ENCODE measurements at regions of chr17 and their contacts with region 1.

Region 1: DNA sequence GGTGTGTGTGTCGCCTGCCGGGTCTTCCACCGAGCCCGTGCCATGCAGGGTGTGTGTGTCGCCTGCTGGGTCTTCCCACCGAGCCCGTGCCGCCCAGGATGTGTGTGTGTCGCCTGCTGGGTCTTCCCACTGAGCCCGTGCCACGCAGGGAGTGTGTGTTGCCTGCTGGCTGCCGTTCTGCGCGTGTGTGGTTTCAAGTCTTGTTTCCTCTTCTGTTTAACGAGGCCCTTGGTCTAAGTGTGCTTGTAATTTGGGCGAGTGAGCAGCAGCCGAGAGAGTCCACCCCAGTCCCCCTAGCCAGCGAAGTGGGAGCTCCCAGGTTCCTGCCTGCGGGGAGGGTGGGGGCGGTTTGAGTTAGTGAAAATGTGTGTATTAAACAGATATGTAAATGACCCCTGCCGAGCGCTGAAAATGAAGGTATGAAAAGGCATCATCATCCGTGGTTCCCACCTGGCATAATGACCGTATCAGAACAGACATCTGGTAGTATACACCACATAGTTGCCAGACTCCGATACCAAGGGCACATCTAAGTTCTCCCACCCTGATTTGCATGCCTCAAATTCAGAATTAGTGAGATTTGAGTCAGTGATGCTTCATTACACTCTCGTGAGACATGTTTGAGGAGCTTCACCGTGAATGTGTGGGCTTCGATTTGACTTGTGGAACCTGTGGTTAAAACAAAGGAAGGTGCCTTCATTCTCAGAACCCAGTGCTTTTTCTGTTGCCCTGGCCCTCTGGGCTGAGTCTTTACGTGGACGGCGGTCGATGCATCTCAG is 114.5 kb upstream of the CHMP6 start:
- DNase-seq: peak; percentile 89
- H3K4me3 Mint-ChIP-seq: peak overlapping the region; percentile 88
- H3K27ac Mint-ChIP-seq: peak overlapping the region; percentile 99
- H3K4me1 Mint-ChIP-seq: peaks cover 57% of the 10 kb centered on the region
- H3K27me3 Mint-ChIP-seq: no peaks in the 10 kb centered on the region

Region 2: DNA sequence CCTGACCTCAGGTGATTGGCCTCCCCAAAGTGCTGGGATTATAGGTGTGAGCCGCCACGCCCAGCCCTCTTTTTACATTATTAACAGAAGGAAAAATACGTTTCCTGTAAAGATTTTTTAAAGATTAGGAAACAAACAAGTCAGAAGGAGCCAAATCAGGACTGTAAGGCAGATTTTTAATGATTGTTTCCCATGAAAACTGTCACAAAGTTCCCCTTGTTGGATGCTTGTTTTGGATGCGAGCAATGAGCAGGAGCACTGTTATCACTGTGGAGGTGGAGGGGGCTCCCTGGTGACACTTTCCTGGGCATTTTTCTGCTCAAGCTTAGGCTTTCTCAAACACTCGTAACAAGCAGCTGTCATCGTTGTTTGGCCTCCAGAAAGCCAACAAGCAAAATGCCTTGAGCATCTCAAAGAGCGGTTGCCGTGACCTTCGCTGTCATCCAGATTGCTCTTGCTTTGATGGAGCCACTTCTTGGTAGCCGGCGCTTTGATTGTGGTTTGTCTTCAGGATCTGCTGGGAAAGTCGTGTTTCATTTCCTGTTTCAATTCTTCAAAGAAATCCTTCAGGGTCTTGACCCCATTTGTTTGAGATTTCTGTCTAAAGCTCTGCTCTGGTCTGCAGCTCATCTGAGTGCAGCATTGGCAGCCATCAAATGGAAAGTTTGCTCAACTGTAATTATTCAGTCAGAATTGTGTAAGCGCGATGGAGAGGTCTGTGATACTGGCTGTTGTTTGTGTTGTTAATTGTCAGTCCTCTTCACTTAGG is 203.8 kb before region 1 on chr17:
- intact Hi-C with region 1: loop called (anchors 5 kb)
- DNase-seq: peak; percentile 81
- H3K4me3 Mint-ChIP-seq: peak overlapping the region; percentile 58
- H3K27ac Mint-ChIP-seq: peak overlapping the region; percentile 72
- H3K4me1 Mint-ChIP-seq: peaks cover 77% of the 10 kb centered on the region
- H3K27me3 Mint-ChIP-seq: no peaks in the 10 kb centered on the region

Region 3: DNA sequence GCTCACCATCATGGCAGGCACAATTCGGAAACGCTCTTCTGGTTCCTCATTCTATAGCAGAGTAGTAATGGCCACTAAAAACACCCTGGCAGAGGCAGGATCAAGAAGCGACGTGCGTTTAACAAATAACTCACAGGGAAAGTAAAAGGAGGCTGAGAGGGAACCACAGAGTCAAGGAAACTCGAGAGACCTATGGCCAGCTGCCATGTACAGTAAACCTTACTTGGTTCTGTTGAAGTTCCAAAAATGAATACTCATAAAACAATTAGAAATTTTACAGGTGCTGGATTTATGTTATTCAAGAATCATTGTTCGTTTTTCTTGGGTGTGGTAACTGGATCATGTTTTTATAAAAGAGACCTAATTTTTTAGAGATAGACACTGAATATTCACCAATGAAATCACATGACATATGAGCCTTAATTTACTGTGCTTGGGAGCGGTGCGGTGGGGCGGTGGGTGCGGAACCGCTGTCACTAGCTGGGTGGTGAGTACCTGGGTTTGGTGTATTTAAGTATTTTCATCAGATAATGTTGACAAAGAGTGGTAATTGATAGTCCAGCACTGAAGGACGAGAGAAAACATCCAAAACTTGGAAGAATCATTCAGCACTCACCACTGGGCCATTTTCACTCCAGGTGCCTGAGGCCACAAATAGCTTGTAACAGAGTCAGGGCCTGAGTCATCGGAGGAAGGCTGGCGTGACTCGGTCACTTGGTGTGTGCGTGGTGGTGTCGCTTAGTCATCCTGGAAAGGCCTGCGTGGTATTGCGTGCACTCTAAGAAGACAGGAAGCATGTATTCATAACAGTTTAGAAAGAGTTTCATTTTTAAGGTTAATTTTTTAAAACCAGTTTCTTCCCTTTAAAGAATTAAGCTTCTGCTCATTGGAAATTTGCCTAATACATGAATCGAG is 20.9 kb before region 1 on chr17:
- intact Hi-C with region 1: loop called (anchors 1 kb)
- DNase-seq: peak; percentile 95
- H3K4me3 Mint-ChIP-seq: peak overlapping the region; percentile 62
- H3K27ac Mint-ChIP-seq: peak overlapping the region; percentile 91
- H3K4me1 Mint-ChIP-seq: peaks cover 73% of the 10 kb centered on the region
- H3K27me3 Mint-ChIP-seq: no peaks in the 10 kb centered on the region

Measured in activated CD4-positive, alpha-beta T cell treated with anti-CD3 and anti-CD28 coated beads, Interleukin-2, amount 10 ng/mL, durations not matched to agents 24 days and 14 days (primary cell).